Naive thymus-derived CD8-positive, alpha-beta T cell (primary cell): ENCODE measurements at regions of chr3 and their contacts with region 1.

Region 1: DNA sequence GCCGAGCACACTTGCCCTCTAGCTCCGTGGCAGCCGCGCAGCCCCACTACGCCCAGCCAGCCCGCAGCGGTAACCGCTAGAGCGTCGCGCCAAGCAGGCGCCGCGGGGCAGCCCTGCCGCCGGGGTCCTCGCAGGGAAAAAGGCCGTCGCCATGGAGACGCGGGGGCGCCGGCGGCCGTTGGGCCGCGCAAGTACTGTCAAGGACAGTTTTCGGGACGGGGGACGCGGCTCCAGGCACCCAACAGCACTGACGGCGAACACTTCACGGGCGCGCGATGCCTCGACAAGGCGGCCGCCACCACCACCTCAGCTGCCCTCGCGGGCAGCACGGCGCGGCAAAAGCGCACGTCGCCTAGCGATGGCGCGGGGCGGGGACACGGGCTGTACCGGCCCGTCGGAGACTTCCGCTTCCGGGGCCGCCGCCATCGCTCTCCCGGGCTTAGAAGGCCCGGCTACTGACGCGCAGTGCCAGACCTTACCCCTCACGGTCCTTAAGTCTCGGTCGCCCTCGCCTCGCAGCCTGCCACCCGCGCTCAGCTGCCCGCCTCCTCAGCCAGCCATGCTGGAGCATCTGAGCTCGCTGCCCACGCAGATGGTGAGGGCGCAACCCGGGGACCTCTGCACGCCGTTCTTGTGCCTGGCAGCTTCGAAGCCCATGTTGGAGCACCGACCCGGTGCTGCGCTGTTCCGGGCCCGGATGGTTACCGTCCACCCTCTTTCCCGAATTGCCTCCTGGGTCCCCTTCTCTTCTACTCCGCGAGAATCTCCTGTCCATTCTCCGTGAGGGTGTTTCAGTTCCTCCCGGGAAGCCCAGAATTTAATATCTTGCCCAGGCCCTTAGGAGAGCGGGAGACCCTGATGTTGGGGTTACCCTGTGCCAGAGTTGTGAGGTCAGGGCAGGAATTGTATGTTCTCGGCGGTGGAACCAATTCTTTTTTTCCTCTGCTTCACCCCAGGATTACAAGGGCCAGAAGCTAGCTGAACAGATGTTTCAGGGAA is at the starts of genes GLT8D1 and SPCS1:
- DNase-seq: peak; percentile 75 to 97 (median 86)
- ATAC-seq: peak; percentile 90
- H3K4me3 Mint-ChIP-seq: peak within 1 kb of the TSS; percentile 89 to 95 (median 94)
- H3K27ac Mint-ChIP-seq: peak within 1 kb of the TSS; percentile 90 to 98 (median 96)
- H3K4me1 Mint-ChIP-seq: peaks cover 14 to 47% (median 35%) of the 10 kb centered on the region in 4 donors
- H3K27me3 Mint-ChIP-seq: no peaks in the 10 kb centered on the region
- polyA plus RNA-seq, gene GLT8D1: 54.8 to 67.4 (median 58.3) TPM
- polyA plus RNA-seq, gene SPCS1: 340 to 369 (median 348) TPM

Region 2: DNA sequence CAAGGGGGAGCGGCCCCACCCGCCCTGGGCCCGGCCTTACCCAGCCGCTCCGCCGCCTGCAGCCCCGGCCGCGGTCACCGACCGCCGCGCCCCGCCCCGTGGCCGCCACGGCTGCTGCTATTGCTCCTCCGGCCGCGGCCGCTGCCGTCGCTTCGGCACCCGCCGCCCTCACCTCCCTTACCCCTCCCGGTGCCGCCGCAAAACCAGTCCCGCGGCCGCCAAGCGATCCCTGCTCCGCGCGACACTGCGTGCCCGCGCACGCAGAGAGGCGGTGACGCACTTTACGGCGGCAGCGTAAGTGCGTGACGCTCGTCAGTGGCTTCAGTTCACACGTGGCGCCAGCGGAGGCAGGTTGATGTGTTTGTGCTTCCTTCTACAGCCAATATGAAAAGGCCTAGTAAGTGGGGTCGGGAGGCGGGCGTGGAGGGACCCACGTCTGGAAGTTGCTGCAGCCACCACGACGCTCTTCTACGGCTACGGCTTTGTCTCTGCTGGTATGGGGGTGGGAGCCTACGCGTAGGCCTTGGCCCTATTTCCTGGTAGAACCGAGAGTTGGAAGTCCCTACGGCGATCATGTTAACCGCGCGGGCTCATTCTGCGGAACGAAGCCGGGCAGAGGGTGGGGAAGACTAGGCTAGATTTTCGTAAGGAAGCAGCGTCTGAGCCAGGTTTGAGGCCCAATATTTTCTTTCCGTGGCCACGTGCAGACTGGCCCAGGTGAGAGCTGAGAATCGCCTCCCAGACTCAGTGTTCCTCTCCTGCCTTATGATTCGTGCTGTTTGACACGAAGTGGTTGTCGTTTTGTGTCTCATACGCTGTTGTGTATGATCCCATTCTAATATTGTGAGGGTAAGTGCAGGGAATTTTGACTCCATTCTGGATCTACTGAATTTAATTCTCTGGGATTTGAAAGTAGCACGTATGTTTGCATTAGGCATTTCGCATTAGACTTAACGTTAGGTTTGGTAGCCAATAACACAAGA is 20.0 kb before region 1 on chr3 and contains the starts of genes GNL3 and PBRM1:
- POLR2A ChIA-PET with region 1: interaction called, 33 read pairs
- DNase-seq: peak; percentile 88 to 94 (median 91)
- ATAC-seq: peak; percentile 85 to 88
- H3K4me3 Mint-ChIP-seq: peak within 1 kb of the TSS; percentile 94 to 99 (median 98)
- H3K27ac Mint-ChIP-seq: peak within 1 kb of the TSS; percentile 96 to 100 (median 99)
- H3K4me1 Mint-ChIP-seq: peaks cover 28 to 67% (median 49%) of the 10 kb centered on the region in 4 donors
- H3K27me3 Mint-ChIP-seq: no peaks in the 10 kb centered on the region
- polyA plus RNA-seq, gene GNL3: 41.8 to 77.5 (median 73.2) TPM
- polyA plus RNA-seq, gene PBRM1: 71.8 to 81.4 (median 80.5) TPM

Region 3: DNA sequence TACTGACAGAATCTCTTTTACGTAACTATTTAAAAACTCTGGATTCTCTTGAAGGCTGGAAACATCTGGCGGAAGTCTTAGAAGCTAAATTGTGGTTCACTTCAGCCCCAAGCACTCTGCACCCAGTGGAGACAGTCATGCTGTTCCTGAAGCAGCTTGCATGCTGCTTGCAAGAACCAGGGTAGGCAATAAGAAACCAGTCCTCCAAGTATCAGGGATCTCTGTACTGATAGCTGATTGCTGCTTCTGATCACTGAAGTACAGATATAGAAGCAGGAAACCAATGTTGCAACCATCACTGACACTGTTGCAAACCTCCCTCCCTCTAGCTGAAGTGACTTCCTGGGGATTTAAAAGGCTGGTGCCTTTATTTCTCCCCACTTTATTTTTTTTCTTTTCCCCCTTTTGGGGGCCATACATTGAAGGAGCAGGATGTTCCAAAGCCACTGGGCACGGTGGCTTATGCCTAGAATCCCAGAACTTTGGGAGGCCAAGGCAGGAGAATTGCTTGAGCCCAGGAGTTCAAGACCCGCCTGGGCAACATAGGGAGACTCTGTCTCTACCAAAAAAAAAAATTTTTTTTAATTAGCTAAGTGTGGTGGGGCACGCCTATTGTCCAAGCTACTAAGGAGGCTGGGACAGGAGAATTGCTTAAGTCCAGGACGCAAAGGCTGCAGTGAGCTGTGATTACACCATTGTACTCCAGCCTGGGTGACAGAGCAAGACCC is 15.2 kb after region 1 on chr3:
- POLR2A ChIA-PET with region 1: interaction called, 43 read pairs
- DNase-seq: peak in 7 of 10 donors; percentile 13 to 61 (median 34)
- ATAC-seq: peak; percentile 80 to 91
- H3K4me3 Mint-ChIP-seq: peak overlapping the region; percentile 29 to 77 (median 66)
- H3K27ac Mint-ChIP-seq: peak overlapping the region; percentile 84 to 93 (median 91)
- H3K4me1 Mint-ChIP-seq: peaks cover 12 to 40% (median 29%) of the 10 kb centered on the region in 4 donors
- H3K27me3 Mint-ChIP-seq: no peaks in the 10 kb centered on the region

Region 4: DNA sequence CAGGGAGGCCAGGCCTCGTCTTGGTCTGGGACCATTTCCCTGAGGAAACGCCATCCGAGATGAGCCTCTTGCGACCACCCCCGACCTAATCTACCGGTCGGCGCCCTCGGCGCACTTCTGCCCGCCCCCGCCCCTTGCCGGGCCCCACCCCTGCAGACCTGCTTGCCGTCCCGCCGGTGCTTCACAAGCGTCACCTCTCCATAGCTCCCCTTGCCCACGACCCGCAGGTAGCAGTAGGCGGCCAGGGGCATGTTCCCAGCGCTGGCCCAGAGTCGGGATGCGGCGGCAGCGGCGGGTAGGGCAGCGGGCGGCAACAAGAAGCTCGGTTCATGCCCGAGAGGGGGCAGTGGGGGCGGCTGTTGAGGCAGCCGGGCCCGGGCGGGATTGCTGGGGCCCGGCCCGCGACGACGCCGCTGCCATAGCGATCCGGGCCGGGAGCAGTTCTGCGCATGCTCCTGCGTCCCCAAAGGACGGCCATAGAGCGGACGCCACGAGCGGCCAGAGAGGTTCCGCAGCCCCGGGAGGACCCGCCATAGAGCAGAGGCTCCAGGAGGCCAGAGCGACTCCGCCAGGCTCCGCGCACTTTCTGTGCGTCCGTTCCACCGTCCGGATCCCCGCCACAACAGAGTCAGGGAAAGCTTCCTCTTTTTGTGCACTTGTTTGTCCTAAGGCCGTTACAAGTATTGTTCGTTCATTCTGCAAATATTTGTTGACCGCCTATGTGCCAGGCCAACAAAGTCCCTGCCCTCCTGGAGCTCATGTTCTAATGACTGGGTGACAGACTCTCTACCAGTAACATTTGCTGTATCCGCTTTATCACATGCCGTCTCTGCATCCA is 64.7 kb after region 1 on chr3 and contains the start of gene NEK4:
- POLR2A ChIA-PET with region 1: interaction called, 11 read pairs
- DNase-seq: peak; percentile 55 to 89 (median 74)
- ATAC-seq: peak; percentile 87 to 95
- H3K4me3 Mint-ChIP-seq: peak within 1 kb of the TSS; percentile 74 to 99 (median 98)
- H3K27ac Mint-ChIP-seq: peak within 1 kb of the TSS; percentile 89 to 98 (median 96)
- H3K4me1 Mint-ChIP-seq: peaks cover 20 to 33% (median 24%) of the 10 kb centered on the region in 4 donors
- H3K27me3 Mint-ChIP-seq: no peaks in the 10 kb centered on the region
- polyA plus RNA-seq, gene NEK4: 6.2 to 12.4 (median 10.3) TPM

Region 5: GRCh38 chr3:52809662-52810377 is 103.8 kb after region 1 on chr3:
- POLR2A ChIA-PET with region 1: no interaction called
- DNase-seq: no peak
- ATAC-seq: peak in 1 of 2 donors; percentile 40
- H3K4me3 Mint-ChIP-seq: no peak overlapping the region
- H3K27ac Mint-ChIP-seq: peak overlapping the region in 1 of 10 donors; percentile 33
- H3K4me1 Mint-ChIP-seq: peaks cover 5 to 14% (median 8%) of the 10 kb centered on the region in 4 donors
- H3K27me3 Mint-ChIP-seq: no peaks in the 10 kb centered on the region